ENCODE measurements at regions of chr12 and their contacts with region 1.

Region 1: DNA sequence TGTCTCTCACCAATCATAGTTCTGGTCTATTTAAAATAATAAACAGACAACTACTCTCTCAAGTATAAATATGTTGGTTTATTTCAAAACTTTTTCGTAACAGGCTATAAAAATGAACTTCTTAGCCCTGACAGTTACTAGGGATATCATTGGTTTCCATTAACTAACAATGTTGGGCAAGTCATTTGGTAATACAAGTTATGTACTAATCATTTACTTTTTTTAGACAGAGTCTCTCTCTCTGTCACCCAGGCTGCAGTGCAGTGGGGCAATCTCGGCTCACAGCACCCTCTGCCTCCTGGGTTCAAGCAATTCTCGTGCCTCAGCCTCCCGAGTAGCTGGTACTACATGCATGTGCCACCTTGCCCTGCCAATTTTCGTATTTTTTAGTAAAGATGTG is 14.6 kb upstream of the KANSL2 start:
- DNase-seq: no peak
- ATAC-seq: no peak
- H3K4me3 Mint-ChIP-seq: no peak overlapping the region
- H3K27ac Mint-ChIP-seq: no peak overlapping the region
- H3K4me1 Mint-ChIP-seq: peaks cover 5% of the 10 kb centered on the region
- H3K27me3 Mint-ChIP-seq: no peaks in the 10 kb centered on the region

Region 2: GRCh38 chr12:48659863-48660262 is 36.8 kb before region 1 on chr12:
- CTCF ChIA-PET with region 1: no interaction called
- POLR2A ChIA-PET with region 1: no interaction called
- intact Hi-C with region 1: loop called in 1 of 2 experiments (anchors 5 kb)
- DNase-seq: no peak
- ATAC-seq: no peak
- H3K4me3 Mint-ChIP-seq: no peak overlapping the region
- H3K27ac Mint-ChIP-seq: no peak overlapping the region
- H3K4me1 Mint-ChIP-seq: no peaks in the 10 kb centered on the region
- H3K27me3 Mint-ChIP-seq: no peaks in the 10 kb centered on the region